ENCODE measurements at regions of chr1 and their contacts with region 1.

Region 1: DNA sequence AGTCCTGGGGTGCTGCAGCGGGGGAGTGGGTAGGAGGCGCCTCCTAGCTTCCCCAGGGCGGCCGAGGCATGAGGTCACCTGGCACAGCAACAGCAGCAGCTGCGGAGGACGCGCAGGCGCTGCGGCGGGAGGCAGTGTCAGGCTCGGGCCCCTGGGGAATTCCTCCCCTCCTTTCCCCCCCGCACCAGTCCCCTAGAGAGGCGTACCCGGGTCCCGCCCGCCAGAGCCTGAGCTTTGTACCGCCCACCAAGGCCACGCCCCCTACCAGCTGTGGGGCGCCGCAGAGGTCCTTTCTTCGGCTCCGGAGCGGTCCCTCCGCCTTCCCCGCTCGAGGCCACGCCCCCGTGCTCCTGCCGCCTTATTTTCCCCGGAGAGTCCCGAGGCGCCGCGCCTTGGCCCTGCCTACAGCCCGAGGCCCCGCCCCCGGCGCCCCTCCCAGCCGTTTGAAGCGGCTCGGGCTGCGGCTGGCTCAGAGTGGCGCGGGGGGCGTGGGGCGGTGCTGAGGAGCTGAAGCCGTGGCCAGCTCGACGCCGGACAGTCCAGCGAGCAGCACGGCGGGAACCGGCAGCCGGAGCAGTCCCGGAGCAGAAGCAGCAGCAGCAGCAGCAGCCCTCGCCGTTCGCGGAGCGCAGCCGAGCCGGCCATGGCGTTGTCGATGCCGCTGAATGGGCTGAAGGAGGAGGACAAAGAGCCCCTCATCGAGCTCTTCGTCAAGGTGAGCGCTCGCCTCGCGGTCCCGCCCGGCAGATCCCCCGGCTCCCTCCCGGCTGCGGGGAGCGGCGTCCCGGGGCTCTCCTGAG is at the start of gene CLIC4:
- DNase-seq: peak; percentile 100
- H3K4me3 Mint-ChIP-seq: peak within 1 kb of the TSS; percentile 88
- H3K27ac Mint-ChIP-seq: peak within 1 kb of the TSS; percentile 77
- H3K4me1 Mint-ChIP-seq: peaks cover 52% of the 10 kb centered on the region
- H3K27me3 Mint-ChIP-seq: no peaks in the 10 kb centered on the region
- total RNA-seq, gene CLIC4: 38.0 to 44.3 TPM

Region 2: DNA sequence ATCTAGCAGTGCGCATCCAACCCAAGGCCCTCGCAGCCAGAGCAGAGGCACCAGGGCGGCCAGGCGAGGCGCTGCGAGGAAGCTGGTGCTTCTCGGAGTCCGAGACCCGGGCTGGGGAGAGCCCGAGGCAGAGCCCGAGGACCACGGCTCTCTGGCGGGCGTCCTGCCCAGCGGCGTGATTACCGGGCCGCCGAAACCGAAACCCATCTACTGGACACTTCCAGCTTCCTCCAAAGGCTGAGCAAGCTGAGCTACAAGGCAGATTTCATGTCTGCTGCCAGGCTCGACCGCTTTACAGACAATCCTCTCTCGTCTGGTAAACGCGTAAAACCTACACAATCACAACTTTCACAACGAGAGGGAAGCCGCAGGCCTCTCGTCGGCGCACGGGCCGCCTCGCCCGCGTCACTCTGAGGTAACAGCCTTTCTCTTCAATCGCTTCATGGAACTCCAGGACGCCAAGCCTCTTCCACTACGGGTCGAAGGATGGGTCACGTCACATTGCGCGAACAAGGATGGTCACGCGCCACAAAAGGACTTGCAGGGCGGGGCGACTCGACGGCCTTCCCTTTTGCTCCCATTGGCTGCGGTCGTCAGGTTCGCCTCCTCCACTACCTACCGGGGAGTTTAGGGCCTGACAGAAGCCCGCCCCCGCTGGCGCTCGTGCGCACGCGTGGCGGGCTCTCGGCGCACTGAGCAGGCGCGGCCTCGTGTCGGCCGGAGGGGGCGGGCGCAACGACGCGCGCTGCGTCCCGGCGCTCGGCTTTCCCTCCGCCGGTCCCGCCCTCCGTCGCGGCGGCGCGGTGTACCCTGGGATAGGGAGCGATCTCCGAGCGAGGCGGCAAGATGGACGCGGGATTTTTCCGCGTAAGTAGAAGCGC is 102.4 kb before region 1 on chr1 and contains the start of gene SRRM1:
- CTCF ChIA-PET with region 1: no interaction called
- intact Hi-C with region 1: loop called (anchors 1 kb)
- DNase-seq: peak; percentile 100
- H3K4me3 Mint-ChIP-seq: peak within 1 kb of the TSS; percentile 83
- H3K27ac Mint-ChIP-seq: peak within 1 kb of the TSS; percentile 98
- H3K4me1 Mint-ChIP-seq: peaks cover 48% of the 10 kb centered on the region
- H3K27me3 Mint-ChIP-seq: no peaks in the 10 kb centered on the region
- total RNA-seq, gene SRRM1: 226 to 235 TPM

Region 3: DNA sequence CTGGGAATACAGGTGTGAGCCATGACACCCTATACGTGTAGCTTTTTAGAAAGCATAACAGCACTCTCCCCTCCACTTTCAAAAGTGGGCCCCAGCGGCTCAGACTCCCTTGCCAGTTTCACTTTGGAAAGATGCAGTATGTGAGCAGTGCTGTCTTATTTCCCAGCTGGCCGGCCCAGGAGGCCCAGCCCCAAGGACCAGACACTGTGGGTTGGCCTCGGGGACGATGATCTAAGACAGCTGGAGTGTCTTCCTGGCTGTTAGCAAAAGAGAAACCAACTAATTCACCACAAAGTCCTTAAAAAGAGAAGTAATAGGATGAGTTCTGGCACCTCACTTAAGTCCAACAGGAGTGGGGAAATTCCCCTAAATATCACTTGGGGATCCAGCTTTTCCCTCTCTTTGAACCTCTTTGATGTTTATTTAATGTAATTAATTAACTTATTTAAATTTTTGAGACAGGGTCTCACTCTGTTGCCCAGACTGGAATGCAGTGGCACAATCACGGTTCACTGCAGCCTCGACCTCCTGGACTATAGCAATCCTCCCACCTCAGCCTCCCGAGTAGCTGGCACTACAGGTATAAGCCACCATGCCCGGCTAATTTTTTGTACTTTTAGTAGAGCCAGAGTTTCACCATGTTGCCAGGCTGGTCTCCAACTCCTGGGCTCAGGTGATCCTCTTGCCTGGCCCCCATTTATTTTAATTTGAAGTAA is 17.5 kb before region 1 on chr1:
- CTCF ChIA-PET with region 1: interaction called, 4 read pairs
- intact Hi-C with region 1: loop called (anchors 1 kb)
- DNase-seq: peak; percentile 41
- H3K4me3 Mint-ChIP-seq: no peak overlapping the region
- H3K27ac Mint-ChIP-seq: no peak overlapping the region
- H3K4me1 Mint-ChIP-seq: peaks cover 8% of the 10 kb centered on the region
- H3K27me3 Mint-ChIP-seq: no peaks in the 10 kb centered on the region

Region 4: DNA sequence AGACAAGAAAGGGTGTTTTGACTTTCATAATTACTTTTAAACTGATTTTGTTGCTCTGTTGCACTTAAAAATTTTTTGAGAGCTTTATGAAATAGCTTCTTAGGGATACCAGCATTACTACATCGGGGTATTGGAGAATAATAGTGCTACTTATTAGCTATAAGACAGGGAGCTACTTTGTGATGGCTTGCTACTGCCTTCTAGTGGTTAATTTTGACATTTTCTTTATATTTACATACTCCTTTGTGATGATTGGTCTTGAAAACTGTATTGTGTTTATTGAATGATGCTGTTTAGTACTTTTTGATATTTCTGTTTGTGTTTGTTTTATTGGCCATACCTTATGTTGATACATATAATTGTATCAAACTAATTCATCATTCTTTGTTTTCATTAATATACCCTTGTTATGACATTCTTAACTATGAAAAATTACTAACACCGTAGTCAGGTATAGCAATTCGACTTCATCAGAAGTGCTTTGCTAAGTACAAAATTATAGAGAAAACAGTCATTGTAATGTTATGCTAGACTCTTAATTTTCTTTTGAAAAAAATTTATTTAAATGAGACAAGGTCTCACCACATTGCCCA is 85.7 kb after region 1 on chr1:
- CTCF ChIA-PET with region 1: interaction called, 3 read pairs
- intact Hi-C with region 1: loop called (anchors 2 kb)
- DNase-seq: no peak
- H3K4me3 Mint-ChIP-seq: no peak overlapping the region
- H3K27ac Mint-ChIP-seq: no peak overlapping the region
- H3K4me1 Mint-ChIP-seq: no peaks in the 10 kb centered on the region
- H3K27me3 Mint-ChIP-seq: no peaks in the 10 kb centered on the region